WTC11 (cell line): ENCODE measurements at regions of chr6 and their contacts with region 1.

Region 1: DNA sequence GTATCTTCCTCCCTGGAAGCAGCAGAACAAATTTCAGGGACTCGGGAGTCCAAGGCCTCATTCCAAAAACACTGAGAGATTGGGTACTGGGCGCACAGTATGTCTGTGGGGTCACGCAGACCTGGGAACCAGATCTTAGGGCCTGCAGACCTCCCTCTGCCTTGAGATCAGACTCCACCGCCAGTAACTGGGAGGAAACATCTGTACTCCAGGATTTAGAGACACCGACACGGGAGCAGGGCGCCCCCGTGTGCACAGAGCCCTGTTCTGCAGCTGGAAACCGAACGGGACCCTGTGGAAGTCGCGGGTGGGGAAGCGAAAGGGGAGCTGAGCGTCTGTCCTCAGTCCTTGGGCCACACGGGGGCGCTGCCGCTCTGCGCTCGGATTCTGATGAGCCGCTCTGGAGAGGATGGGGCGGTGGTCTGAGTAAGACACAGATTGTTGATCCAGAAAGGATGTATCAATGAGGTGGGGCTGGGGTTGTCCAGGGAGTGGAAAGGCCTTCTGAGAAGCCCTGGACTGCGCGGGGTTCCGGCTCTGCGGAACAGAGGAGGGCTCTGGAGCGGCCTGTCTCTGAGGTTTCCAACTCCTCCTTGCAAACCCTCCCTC is 35.7 kb upstream of the HLA-E start:
- DNase-seq: peak; percentile 96
- ATAC-seq: peak; percentile 95
- H3K4me3 Mint-ChIP-seq: no peak overlapping the region
- H3K27ac Mint-ChIP-seq: no peak overlapping the region
- H3K4me1 Mint-ChIP-seq: peaks cover 5% of the 10 kb centered on the region; the same call in 1 of the 2 replicates
- H3K27me3 Mint-ChIP-seq: peaks cover 89% of the 10 kb centered on the region
- CTCF ChIP-seq: peak; percentile 88

Region 2: DNA sequence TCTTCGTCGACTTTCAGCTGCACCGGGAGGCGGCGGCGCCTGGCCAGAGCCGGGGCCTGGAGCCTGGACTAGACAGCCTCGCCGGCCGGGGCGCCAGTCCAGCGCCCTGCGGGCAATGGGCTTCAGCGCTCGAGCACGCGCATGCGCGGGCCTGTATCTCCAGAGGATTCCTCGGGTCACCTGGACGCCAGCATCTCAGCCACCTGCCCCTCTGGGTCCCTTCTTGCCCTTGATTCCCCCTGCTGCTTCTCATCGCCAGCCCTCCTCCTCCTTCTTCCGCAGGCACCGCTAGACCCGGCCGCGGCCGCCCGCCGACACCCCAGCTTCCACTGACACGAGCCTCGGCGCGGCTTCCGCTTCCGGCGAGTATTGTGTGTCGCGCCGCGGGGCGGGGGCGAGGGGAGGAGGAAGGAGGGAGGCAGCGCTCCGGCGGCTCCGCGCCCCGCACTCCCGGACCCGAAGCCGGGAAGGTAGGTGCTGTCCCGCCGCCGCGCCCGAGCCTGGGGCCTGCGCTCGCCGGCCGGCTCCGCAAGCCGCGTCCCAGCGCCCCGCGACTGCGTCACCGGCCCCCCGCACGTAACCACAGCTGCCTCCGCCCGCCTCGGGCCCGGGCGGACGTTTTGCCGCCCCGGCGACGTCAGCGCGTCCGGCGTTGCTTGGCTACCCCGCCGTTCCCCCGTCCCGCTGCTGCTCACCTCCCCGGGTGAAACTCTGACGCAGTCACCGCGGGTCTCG is 126.9 kb before region 1 on chr6 and contains the start of gene TRIM39:
- CTCF ChIA-PET with region 1: interaction called, 10 read pairs
- POLR2A ChIA-PET with region 1: no interaction called
- DNase-seq: peak; percentile 77
- ATAC-seq: peak; percentile 27
- H3K4me3 Mint-ChIP-seq: peak within 1 kb of the TSS; percentile 82
- H3K27ac Mint-ChIP-seq: peak within 1 kb of the TSS; percentile 99
- H3K4me1 Mint-ChIP-seq: peaks cover 48% of the 10 kb centered on the region
- H3K27me3 Mint-ChIP-seq: no peaks in the 10 kb centered on the region; the same call in 1 of the 2 replicates
- CTCF ChIP-seq: no peak
- total RNA-seq, gene TRIM39: 22.7 to 24.9 TPM (median 24.0 TPM) in 3 replicates

Region 3: DNA sequence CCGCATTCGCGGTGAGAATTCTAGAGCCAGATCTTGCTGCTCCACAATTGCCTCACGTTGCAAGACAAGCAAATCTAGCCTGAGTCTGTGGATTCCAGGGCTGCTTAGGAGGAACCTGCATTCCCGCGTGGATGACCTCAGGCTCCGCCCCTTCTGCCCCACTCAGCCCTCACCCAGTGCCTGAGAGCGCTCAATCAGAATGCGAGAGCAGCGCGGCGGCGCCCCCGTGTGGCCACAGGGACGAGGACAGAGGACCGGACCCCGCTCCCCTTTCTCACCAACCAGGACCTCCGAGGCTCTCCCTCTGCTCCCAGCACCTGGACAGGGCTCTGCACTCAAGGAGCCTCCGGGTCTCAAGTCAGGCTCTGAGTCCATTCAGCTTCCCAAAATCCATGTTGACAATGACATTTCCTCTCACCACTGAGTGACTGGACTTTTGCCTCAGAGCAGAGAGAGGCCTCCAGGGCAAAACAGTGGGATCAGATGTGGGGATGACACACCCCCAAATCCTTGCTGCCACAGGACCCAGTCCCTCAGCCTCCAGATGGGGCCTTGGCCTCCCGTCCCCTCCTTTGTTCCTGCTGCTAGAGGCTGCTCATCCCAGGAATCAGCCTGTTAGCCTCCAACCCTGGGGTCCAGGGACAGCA is 56.7 kb before region 1 on chr6:
- CTCF ChIA-PET with region 1: interaction called, 24 read pairs
- POLR2A ChIA-PET with region 1: no interaction called
- DNase-seq: peak; percentile 96
- ATAC-seq: peak; percentile 98
- H3K4me3 Mint-ChIP-seq: peak overlapping the region; percentile 13; the same call in 1 of the 2 replicates
- H3K27ac Mint-ChIP-seq: no peak overlapping the region
- H3K4me1 Mint-ChIP-seq: 0 out of 2 replicates have a peak, but pooled peaks cover 7% of the 10 kb centered on the region
- H3K27me3 Mint-ChIP-seq: peaks cover 36% of the 10 kb centered on the region
- CTCF ChIP-seq: peak; percentile 78

Region 4: DNA sequence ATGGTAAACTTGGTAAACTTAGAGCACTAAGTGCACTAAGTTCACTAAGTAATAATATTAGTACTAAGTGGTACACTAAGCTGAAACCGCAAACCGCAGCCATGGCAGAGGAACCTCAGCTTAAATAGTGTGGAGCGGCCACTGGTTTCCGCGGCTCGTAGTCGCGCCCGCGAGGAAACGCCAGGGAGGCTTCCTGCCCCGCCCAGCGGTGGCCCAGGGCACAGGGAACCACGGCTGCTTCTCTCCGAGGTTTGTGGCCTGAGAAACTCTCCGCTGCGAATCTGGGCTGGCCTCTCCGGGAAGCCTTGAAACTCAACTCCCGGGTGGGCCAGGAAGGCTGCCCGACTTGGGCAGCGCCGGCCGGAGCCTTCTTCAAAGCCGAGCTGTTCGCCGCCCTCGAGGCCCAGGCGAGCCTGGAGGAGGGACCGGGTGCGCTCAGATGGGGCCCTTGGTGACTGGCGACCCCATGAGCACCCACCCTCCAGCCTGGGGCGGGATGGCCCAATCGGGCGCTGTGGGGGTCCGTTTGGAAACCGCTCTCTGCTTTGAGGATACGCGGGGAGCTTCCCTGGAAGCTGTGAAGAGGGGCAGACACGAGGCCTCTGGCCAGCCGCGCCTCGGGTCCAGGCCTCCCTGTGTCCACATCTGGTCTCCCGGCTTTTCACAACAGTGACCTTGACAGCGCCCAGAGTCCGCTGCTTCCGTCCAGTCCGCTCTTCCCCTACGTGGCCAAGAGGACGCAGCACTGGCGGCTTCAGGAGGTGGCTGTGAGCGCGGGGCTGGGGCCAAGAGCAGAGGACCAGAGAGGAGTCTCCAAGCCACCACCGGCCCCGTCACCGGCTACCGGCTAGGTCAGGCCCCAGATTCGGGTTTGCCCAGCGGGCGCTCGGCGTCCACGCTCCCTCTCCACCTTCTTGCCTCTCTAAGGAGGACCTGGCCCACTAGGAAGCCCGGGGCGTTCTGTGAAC is 10.3 kb after region 1 on chr6:
- CTCF ChIA-PET with region 1: interaction called, 33 read pairs
- POLR2A ChIA-PET with region 1: no interaction called
- DNase-seq: peak; percentile 38
- ATAC-seq: peak; percentile 15; the same call in 1 of the 2 replicates
- H3K4me3 Mint-ChIP-seq: no peak overlapping the region
- H3K27ac Mint-ChIP-seq: no peak overlapping the region
- H3K4me1 Mint-ChIP-seq: peaks cover 6% of the 10 kb centered on the region; the same call in 1 of the 2 replicates
- H3K27me3 Mint-ChIP-seq: peaks cover 97% of the 10 kb centered on the region
- CTCF ChIP-seq: no peak

Region 5: DNA sequence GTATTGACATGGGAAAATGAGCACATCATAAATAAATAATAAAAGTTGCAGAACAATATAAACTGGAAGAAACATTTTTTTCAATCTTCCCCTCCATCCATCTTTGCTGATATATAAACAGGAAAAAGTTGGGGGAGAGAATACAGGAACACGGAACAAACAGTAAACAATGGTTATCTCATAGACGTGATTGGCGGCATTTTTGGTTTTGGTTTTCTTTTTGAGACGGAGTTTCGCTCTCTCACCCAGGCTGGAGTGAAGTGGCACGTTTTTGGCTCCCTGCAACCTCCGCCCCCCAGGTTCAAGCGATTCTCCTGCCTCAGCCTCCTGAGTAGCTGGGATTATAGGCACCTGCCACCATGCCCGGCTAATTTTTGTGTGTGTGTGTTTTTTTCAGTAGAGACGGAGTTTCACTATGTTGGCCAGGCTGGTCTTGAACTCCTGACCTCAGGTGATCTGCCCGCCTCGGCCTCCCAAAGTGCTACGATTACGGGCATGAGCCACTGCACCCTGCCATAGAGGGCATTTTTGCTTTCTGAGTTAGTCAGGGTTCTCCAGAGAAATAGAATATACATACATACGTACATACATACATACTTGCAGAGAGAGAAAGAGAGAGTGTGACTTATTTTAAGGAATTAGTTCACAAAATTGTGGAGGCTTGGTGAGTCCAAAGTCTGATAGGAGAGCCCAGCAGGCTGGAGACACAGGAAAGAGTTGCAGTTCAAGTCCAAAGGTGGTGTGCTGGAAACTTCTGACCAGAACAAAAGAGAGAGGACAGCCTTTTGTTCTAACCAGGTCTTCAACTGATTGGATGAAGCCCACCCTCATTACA is 80.1 kb after region 1 on chr6:
- CTCF ChIA-PET with region 1: interaction called, 12 read pairs
- POLR2A ChIA-PET with region 1: no interaction called
- DNase-seq: no peak
- ATAC-seq: no peak
- H3K4me3 Mint-ChIP-seq: no peak overlapping the region
- H3K27ac Mint-ChIP-seq: no peak overlapping the region
- H3K4me1 Mint-ChIP-seq: no peaks in the 10 kb centered on the region
- H3K27me3 Mint-ChIP-seq: no peaks in the 10 kb centered on the region; the same call in 1 of the 2 replicates
- CTCF ChIP-seq: no peak

Region 6: GRCh38 chr6:30583921-30584320 is 130.3 kb after region 1 on chr6:
- CTCF ChIA-PET with region 1: no interaction called
- POLR2A ChIA-PET with region 1: no interaction called
- DNase-seq: no peak
- ATAC-seq: no peak
- H3K4me3 Mint-ChIP-seq: no peak overlapping the region
- H3K27ac Mint-ChIP-seq: no peak overlapping the region
- H3K4me1 Mint-ChIP-seq: no peaks in the 10 kb centered on the region
- H3K27me3 Mint-ChIP-seq: no peaks in the 10 kb centered on the region
- CTCF ChIP-seq: no peak

Region 7: DNA sequence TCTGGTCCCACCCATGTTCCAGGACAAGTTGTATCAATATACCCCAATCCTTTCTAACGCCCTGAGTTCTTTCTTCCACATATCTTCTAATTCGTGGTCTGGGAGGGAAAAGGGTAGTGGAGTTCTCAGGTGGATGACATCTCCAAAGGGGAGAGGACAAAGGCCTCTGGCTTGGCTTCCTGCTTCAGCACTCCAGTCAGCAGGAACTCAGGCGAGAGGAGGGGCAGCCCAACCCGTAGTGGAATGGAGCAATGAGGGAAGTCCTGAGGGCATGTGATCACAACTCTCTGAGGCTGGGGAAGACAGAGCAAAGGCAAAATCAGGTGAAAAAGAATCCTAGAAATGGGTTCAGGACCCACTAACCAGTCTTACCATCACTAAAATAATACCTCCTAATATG is 246.7 kb after region 1 on chr6:
- CTCF ChIA-PET with region 1: no interaction called
- POLR2A ChIA-PET with region 1: no interaction called
- DNase-seq: no peak
- ATAC-seq: peak; percentile 78
- H3K4me3 Mint-ChIP-seq: no peak overlapping the region
- H3K27ac Mint-ChIP-seq: no peak overlapping the region; the same call in 1 of the 2 replicates
- H3K4me1 Mint-ChIP-seq: peaks cover 5% of the 10 kb centered on the region
- H3K27me3 Mint-ChIP-seq: no peaks in the 10 kb centered on the region; the same call in 1 of the 2 replicates
- CTCF ChIP-seq: no peak

Region 8: GRCh38 chr6:31513456-31514165 is 1060.0 kb after region 1 on chr6:
- CTCF ChIA-PET with region 1: no interaction called
- POLR2A ChIA-PET with region 1: no interaction called
- DNase-seq: no peak
- ATAC-seq: no peak
- H3K4me3 Mint-ChIP-seq: no peak overlapping the region
- H3K27ac Mint-ChIP-seq: no peak overlapping the region
- H3K4me1 Mint-ChIP-seq: no peaks in the 10 kb centered on the region
- H3K27me3 Mint-ChIP-seq: no peaks in the 10 kb centered on the region
- CTCF ChIP-seq: no peak